Left ventricle myocardium inferior (tissue), 1 donor: ENCODE measurements at regions of chr15 and their contacts with region 1.

Region 1: GRCh38 chr15:70488002-70488605 is 275.3 kb downstream of the UACA start:
- DNase-seq: peak; percentile 69
- H3K4me3 ChIP-seq: no peak overlapping the region
- H3K27ac ChIP-seq: no peak overlapping the region
- H3K4me1 ChIP-seq: no peaks in the 10 kb centered on the region
- H3K27me3 ChIP-seq: peaks cover 18% of the 10 kb centered on the region
- CTCF ChIP-seq: peak; percentile 99

Region 2: DNA sequence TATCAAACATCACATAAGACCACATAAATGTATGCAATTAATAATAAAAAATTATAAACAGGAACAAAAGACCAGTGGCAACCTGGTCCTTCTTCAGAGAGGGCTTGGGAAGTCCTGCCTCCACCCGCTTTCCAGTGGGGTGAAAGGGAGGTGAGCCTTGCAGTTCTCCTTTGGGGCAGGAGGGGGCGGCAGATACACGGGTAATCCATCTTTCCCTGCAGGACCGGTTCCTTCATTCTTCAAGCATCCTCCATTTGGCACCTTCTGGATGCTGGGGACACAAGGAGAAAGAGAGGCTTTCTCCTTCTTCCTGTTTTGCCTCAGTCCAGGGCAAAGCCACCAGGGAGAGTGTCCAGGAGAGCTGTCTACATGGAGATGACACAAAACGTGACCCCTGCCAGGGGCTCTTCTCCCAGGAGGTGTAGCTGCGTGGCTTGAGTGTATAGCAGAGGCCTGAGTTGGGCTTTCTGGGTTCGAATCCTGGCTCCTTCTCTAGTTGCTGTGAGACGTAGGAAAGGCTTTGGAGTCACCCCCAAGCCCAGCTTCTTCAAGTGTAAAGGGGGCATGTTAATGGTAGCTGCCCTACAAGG is 1012.2 kb before region 1 on chr15:
- intact Hi-C with region 1: loop called (anchors 5 kb)
- DNase-seq: peak; percentile 78
- H3K4me3 ChIP-seq: no peak overlapping the region
- H3K27ac ChIP-seq: no peak overlapping the region
- H3K4me1 ChIP-seq: peaks cover 4% of the 10 kb centered on the region
- H3K27me3 ChIP-seq: peaks cover 17% of the 10 kb centered on the region
- CTCF ChIP-seq: peak; percentile 96